HEK293 (cell line): ENCODE measurements at regions of chr6 and their contacts with region 1.

Region 1: DNA sequence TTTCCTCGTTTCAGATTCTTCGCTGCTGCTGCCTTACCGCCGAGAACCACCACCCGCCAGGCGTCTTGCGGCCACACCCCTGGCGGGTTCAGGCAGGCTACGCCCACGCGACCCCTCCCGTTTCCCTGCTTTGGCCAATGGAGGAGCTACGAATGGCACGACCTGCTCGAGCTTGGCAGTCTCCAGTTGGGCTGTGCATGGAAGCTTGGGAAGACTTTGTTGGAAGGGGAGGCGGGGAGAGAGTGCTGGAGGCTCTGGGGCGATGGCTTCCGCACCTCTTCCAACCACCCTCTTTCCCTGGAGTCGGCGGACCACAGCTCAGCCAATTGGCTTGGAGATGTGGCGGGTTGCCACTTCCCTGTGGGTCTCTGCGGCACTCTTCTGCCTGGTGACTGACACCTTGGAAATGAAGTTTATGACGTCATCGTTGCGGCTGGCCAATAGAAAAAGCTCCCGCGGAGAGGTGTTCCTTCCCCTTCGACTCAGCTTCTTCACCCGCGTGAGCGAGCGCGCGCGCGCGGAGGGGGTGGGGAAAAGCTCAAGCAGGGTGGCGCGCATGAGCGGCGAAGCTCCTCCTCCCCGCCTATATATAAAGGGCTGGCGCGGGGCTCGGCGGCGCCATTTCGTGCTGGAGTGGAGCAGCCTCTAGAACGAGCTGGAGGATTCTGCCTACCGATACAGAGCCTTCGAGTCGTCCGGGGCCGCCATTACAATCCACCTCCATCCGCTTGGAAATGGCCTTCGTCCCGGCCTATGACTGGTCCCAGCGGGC is 3.4 kb downstream of the BRD2 start:
- H3K4me3 ChIP-seq: peak overlapping the region; percentile 97
- H3K27ac ChIP-seq: peak overlapping the region; percentile 99
- H3K4me1 ChIP-seq: peaks cover 20% of the 10 kb centered on the region
- CTCF ChIP-seq: no peak; the same call in 1 of the 2 replicates

Region 2: DNA sequence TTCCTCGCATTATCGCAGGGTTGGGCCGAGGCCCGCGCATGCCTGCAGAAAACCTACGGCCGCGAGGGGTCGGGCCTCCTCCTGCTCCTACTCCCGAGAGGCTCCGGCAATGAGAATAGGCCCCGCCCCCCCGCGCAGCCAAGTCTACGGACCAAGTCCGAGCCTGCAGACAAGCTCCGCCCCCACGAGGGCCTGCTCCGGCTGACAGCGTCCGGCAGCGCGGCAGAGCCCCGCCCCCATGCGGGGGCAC is 776.2 kb before region 1 on chr6:
- CTCF ChIA-PET with region 1: no interaction called
- POLR2A ChIA-PET with region 1: interaction called, 24 read pairs
- H3K4me3 ChIP-seq: peak overlapping the region; percentile 72
- H3K27ac ChIP-seq: peak overlapping the region; percentile 97
- H3K4me1 ChIP-seq: peaks cover 4% of the 10 kb centered on the region
- CTCF ChIP-seq: peak; percentile 85

Region 3: GRCh38 chr6:32742374-32742773 is 229.4 kb before region 1 on chr6:
- CTCF ChIA-PET with region 1: no interaction called
- POLR2A ChIA-PET with region 1: no interaction called
- H3K4me3 ChIP-seq: no peak overlapping the region
- H3K27ac ChIP-seq: no peak overlapping the region
- H3K4me1 ChIP-seq: no peaks in the 10 kb centered on the region
- CTCF ChIP-seq: no peak

Region 4: GRCh38 chr6:32885698-32886286 is 86.0 kb before region 1 on chr6:
- CTCF ChIA-PET with region 1: interaction called, 185 read pairs
- POLR2A ChIA-PET with region 1: interaction called, 24 read pairs
- H3K4me3 ChIP-seq: no peak overlapping the region
- H3K27ac ChIP-seq: no peak overlapping the region
- H3K4me1 ChIP-seq: peaks cover 4% of the 10 kb centered on the region
- CTCF ChIP-seq: peak; percentile 28

Region 5: DNA sequence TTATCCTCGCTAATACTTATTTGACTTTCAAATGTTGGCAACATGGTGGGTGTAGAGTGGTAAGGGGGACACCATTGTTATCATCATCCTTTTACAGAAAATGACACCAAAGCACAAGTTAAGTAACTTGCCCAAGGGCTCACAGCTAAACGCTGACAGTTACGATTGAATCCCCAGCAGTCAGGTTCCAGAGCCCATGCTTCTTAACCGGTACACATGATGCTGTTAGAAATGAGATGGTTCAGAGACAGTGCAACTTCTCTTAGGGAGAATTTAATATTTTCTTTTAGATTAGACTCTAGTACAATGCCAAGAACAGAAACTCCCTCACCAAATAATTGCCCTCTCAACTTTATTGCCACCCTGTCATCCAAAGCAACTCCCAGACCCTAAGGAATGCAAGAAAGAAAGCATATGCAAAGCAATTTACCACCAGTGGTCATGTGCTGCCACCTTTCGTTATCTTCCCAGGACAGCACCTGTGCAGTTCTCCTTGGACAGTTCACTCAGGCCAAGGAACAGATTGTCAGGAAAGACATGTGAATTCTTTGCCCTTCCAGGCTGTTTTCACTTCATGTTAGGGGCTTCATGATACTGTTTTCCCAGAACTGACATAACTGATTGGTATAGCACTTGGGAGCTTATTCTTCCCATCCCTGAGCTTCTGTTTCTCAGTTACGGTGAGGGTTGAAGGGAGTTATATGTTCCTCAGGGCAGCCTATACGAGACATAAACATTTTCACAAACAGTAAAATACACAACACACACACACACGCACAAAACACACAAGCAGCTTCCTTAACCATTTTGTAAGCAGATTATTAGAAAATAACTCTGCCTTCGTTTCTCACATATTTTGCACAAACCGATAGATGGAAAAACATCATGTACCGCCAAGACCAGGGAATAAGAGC is 24.0 kb before region 1 on chr6:
- CTCF ChIA-PET with region 1: interaction called, 344 read pairs
- POLR2A ChIA-PET with region 1: interaction called, 264 read pairs
- H3K4me3 ChIP-seq: no peak overlapping the region
- H3K27ac ChIP-seq: no peak overlapping the region
- H3K4me1 ChIP-seq: no peaks in the 10 kb centered on the region
- CTCF ChIP-seq: peak; percentile 82

Region 6: GRCh38 chr6:33183071-33183683 is 211.4 kb after region 1 on chr6:
- CTCF ChIA-PET with region 1: no interaction called
- POLR2A ChIA-PET with region 1: no interaction called
- H3K4me3 ChIP-seq: no peak overlapping the region
- H3K27ac ChIP-seq: no peak overlapping the region
- H3K4me1 ChIP-seq: no peaks in the 10 kb centered on the region
- CTCF ChIP-seq: no peak

Region 7: DNA sequence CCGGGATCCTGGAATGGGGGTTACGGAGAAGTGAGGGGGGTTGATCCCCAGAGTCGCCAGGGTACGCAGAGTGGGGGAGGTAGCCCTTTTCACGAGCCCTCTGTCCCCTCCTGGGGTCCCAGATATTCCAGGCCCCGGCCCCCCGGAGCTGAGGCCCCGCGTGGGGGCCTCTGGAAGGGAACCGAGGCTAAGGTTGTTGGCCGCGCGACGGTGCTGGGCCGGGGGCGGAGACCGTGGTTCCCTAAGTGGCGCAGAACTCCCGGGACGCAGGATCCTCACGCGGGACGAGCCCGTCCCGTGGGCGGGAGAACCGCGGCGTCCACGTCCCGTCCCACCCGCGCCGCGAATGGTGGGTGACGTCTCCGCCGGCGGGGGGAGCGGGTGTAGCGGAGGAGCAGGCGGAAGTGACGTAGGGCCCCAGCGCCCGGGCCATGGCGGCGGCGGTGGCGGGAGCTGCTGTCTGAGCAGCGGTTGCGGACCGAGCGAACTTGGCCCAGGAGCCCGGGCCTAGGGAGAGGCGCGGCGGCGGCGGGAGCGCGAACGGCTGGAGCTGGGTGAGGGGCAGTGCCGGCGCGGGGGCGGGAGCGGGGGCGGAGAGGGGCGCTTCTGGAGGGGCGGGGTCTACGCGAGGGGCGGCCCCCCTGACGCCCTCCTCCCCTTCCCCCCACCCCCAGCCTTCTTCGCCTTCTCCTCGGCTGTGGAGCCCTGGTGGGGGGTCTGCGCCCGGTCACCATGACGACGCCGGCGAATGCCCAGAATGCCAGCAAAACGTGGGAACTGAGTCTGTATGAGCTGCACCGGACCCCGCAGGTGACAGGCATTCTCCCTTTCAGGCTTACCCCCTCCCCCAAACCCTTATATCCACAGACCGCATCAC is 236.6 kb after region 1 on chr6 and contains the start of gene RING1:
- CTCF ChIA-PET with region 1: no interaction called
- POLR2A ChIA-PET with region 1: interaction called, 23 read pairs
- H3K4me3 ChIP-seq: peak within 1 kb of the TSS; percentile 88
- H3K27ac ChIP-seq: peak within 1 kb of the TSS; percentile 95
- H3K4me1 ChIP-seq: peaks cover 21% of the 10 kb centered on the region
- CTCF ChIP-seq: no peak; the same call in 1 of the 2 replicates

Region 8: GRCh38 chr6:33417903-33418689 is 446.3 kb after region 1 on chr6 and contains the start of gene CUTA:
- CTCF ChIA-PET with region 1: no interaction called
- POLR2A ChIA-PET with region 1: interaction called, 10 read pairs
- H3K4me3 ChIP-seq: peak within 1 kb of the TSS; percentile 46
- H3K27ac ChIP-seq: peak within 1 kb of the TSS; percentile 67
- H3K4me1 ChIP-seq: no peaks in the 10 kb centered on the region
- CTCF ChIP-seq: peak; percentile 90